Prostate gland (tissue), 2 donors: ENCODE measurements at regions of chr11 and their contacts with region 1.

Region 1: DNA sequence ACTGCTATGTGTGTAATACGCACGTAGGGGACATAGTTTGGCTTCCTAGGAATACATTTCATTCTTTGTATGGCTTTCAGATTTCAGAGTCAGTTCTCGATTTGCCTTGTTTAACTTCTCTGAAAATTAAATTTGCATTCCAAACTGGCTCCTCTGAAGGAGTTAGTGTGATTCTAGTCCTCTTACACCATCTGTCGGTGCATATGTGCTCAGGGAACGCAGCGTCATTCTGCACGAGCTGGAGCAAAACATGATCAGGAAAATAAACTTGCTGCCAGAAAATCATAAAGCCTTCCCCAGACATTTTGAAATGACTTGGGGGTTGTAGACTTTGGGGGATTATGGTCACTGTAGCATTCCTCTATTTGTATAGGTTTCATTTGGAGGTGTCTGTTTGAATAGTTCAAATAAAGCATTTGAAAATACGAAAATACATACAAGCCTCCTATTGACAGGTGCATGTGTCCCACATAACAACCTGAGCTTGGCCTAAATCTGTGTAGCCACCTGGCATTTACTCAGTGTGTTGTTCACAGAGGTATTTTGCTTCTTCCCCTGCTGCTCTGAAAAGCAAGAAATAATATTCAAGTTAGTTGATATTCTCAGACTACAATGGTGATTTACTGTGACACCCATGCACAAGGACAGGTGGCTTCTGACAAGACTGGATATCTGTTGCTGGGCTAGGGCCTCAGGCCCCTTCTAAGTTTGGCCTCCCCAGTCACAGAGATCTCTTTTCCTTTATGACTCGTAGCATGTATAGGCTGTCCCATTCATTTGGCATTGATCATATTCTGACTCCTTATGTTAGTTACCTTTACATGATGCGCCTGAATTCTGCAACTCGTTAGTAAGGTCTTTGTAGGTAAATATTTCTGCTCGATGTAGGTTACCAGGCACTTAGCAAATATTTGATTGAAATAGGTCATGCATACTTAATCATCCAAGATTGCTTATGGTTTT is 81.6 kb upstream of the SORL1-AS1 start:
- DNase-seq: peak; percentile 30
- H3K4me3 ChIP-seq: no peak overlapping the region
- H3K27ac ChIP-seq: no peak overlapping the region
- H3K4me1 ChIP-seq: peaks cover 3% of the 10 kb centered on the region
- H3K27me3 ChIP-seq: no peaks in the 10 kb centered on the region
- CTCF ChIP-seq: peak; percentile 31 to 78 (median 56)
- POLR2A ChIP-seq: no peak

Region 2: GRCh38 chr11:121318848-121319834 is 215.3 kb before region 1 on chr11:
- intact Hi-C with region 1: loop called (anchors 2 kb)
- DNase-seq: peak; percentile 47
- H3K4me3 ChIP-seq: no peak overlapping the region
- H3K27ac ChIP-seq: no peak overlapping the region
- H3K4me1 ChIP-seq: no peaks in the 10 kb centered on the region
- H3K27me3 ChIP-seq: no peaks in the 10 kb centered on the region
- CTCF ChIP-seq: peak; percentile 55 to 88 (median 74)
- POLR2A ChIP-seq: no peak

Region 3: GRCh38 chr11:121451986-121452608 is 82.3 kb before region 1 on chr11 and contains the start of gene SORL1:
- intact Hi-C with region 1: loop called (anchors 2 kb)
- DNase-seq: peak; percentile 85
- H3K4me3 ChIP-seq: peak within 1 kb of the TSS; percentile 84 to 85
- H3K27ac ChIP-seq: peak within 1 kb of the TSS; percentile 76 to 82
- H3K4me1 ChIP-seq: no peaks in the 10 kb centered on the region
- H3K27me3 ChIP-seq: no peaks in the 10 kb centered on the region
- CTCF ChIP-seq: peak; percentile 52 to 83 (median 70)
- POLR2A ChIP-seq: no peak
- total RNA-seq, gene SORL1: 77.4 to 97.6 TPM

Region 4: GRCh38 chr11:121591405-121592033 is 57.1 kb after region 1 on chr11:
- intact Hi-C with region 1: loop called (anchors 5 kb)
- DNase-seq: peak; percentile 79
- H3K4me3 ChIP-seq: no peak overlapping the region
- H3K27ac ChIP-seq: no peak overlapping the region
- H3K4me1 ChIP-seq: peaks cover 5% of the 10 kb centered on the region
- H3K27me3 ChIP-seq: no peaks in the 10 kb centered on the region
- CTCF ChIP-seq: peak; percentile 81 to 92 (median 88)
- POLR2A ChIP-seq: no peak

Region 5: GRCh38 chr11:121606354-121606753 is 71.9 kb after region 1 on chr11:
- intact Hi-C with region 1: no loop called
- DNase-seq: no peak
- H3K4me3 ChIP-seq: no peak overlapping the region
- H3K27ac ChIP-seq: no peak overlapping the region
- H3K4me1 ChIP-seq: no peaks in the 10 kb centered on the region
- H3K27me3 ChIP-seq: no peaks in the 10 kb centered on the region
- CTCF ChIP-seq: no peak
- POLR2A ChIP-seq: no peak